ENCODE measurements at regions of chr2 and their contacts with region 1.

Region 1: DNA sequence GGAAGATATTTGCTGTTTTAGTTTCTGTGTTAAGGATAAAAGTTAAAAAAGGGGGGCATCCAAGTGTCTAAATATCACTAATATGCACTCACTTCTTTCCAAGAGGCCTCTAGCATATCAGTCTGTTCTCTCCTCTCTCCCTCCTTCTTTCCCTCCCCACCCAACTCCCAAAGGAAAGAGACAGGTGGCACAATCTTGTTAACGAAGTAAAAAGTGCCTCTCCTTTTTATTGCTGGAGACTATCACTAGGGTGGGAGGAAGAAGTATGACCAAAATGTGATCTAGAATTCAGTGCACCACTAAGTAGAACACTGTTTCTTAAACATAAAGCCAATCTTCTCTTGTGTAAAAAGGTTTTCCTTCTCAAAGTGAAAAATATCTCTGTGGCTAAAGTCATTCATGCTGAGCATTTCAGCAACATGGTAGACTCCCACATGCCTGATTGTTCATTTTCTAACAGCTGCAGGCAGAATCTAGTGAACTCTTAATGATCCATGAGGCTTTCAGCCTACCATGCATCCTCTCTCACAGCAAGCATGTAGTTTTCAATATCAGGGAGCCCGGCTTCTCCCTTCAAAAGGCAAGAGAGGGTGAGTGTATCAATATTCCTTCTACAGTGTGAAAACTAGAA is 39.5 kb downstream of the RNU4ATAC start:
- DNase-seq: no peak
- H3K4me3 ChIP-seq: no peak overlapping the region
- H3K27ac ChIP-seq: no peak overlapping the region
- H3K4me1 ChIP-seq: peaks cover 17% of the 10 kb centered on the region
- H3K27me3 ChIP-seq: no peaks in the 10 kb centered on the region
- CTCF ChIP-seq: no peak

Region 2: DNA sequence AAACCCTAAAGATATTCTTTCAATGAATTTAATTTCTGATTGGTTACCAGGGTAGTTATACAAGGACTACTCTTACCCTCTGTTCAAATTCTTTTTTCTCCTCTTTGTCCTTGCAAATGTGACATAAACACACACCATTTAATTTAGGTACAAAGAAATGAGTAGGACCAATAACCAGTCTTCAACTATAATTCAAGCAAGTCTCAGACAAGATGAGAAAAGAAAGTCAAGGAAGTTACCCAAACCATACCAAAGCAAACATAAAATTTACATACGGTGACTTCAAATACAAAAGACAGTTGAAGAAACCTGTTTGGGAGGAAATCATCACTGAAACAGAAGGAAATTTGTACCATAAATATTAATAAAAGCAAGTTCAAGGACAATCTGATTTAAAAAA is 1648.3 kb before region 1 on chr2:
- CTCF ChIA-PET with region 1: interaction called, 10 read pairs
- POLR2A ChIA-PET with region 1: no interaction called
- intact Hi-C with region 1: no loop called
- DNase-seq: no peak
- H3K4me3 ChIP-seq: no peak overlapping the region
- H3K27ac ChIP-seq: no peak overlapping the region
- H3K4me1 ChIP-seq: no peaks in the 10 kb centered on the region
- H3K27me3 ChIP-seq: no peaks in the 10 kb centered on the region
- CTCF ChIP-seq: no peak

Region 3: DNA sequence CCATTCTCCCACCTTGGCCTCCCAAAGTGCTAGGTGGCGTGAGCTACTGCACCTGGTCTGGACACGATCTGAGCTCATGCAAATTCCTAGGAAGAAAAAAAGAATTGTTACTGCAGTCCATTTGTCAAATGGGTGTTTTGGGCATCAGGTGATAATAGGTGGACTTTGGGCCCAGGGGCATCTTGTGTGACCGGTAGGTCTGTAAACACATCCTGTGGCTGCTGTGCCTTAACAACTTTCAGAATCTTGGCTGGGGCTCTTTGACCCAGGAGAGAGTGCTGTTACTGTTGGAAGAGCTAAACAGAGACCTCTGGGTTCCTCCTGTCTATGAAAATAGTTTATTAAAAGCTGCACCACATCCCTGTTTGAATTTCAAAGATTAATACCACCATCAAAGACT is 250.2 kb before region 1 on chr2:
- CTCF ChIA-PET with region 1: no interaction called
- POLR2A ChIA-PET with region 1: no interaction called
- intact Hi-C with region 1: no loop called
- DNase-seq: no peak
- H3K4me3 ChIP-seq: no peak overlapping the region
- H3K27ac ChIP-seq: no peak overlapping the region
- H3K4me1 ChIP-seq: no peaks in the 10 kb centered on the region
- H3K27me3 ChIP-seq: no peaks in the 10 kb centered on the region
- CTCF ChIP-seq: no peak

Measured in A673 (cell line).